OCI-LY7 (cell line): ENCODE measurements at regions of chr9 and their contacts with region 1.

Region 1: DNA sequence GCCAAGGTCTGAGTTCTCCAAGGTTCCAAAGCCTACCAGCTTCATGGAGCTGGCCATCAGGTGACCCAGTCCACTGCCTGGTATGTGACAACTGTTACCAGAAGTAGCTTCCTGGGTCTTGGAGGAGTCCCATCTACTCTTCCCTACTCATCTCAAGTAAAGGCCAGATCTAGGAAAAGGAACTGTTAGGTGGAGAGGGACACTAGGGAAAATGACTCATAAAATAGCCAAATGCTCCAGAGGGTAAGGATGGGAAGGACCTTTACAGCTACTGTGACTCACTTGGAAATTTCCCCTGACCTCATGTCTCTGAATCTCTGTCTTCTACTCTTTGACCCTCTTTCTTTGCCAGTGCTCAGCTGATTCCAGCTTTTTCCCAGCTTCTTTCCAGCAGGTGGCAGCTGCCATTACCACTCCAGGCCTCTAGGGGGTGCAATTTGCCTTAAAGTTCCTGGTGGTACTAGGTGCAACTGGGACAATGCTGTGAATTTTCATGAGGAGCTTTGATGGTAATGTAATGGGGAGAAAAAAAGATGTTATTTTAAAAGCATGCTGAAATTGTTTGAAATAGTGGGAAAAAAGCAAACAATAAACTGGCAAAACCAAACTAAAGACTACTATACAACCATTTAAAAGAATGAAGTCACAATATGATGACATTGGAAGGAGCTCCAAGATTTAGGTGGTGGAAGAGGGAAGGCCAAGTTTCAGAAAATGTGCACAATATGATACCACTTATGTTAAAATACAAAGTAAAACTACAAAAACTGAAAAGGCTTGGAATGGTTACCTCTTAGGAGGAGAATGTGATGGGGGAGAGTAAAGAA is 27.1 kb upstream of the MYORG start:
- DNase-seq: peak; percentile 65
- H3K4me3 ChIP-seq: no peak overlapping the region
- H3K27ac ChIP-seq: no peak overlapping the region
- H3K4me1 ChIP-seq: no peaks in the 10 kb centered on the region
- CTCF ChIP-seq: peak; percentile 100

Region 2: DNA sequence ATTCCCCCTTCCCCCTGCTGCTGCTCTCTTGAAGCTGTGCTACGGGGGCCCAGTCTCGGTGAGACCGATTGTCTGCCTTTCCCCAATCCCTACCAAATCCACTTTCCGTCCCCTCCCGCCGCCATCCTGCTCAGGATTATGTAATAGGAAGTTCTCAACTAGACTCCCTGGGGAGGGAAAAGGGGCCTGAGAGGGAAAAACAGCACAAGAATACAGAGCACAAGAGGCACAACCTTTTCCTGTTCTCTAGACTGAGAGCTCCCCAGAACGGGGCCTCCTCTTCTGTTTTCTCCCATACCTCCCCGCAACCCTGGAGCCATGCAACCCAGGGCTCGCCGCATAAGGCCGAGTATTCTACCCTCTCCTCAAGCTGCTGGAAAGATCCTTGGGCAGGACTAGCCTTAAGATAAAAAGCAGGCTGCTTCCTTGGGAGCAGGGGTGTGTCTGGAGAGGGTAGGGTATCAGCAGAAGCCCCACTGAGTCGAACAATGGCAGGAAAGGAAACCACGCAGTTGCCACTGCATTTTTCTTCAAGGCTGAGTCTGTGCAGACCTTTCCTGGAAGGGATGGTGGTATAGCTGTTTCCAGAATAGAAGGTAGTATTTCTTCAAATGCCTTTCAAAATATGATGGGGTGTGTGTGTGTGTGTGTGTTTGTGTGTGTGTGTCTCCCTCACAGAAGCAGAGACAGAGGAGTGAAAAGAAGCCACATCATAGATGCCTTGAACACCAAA is 40.0 kb before region 1 on chr9:
- CTCF ChIA-PET with region 1: no interaction called
- POLR2A ChIA-PET with region 1: no interaction called
- intact Hi-C with region 1: no loop called
- DNase-seq: no peak
- H3K4me3 ChIP-seq: no peak overlapping the region
- H3K27ac ChIP-seq: no peak overlapping the region
- H3K4me1 ChIP-seq: no peaks in the 10 kb centered on the region
- CTCF ChIP-seq: no peak

Region 3: GRCh38 chr9:34384368-34385165 is 19.2 kb before region 1 on chr9:
- CTCF ChIA-PET with region 1: no interaction called
- POLR2A ChIA-PET with region 1: no interaction called
- intact Hi-C with region 1: no loop called
- DNase-seq: no peak
- H3K4me3 ChIP-seq: no peak overlapping the region
- H3K27ac ChIP-seq: no peak overlapping the region
- H3K4me1 ChIP-seq: peaks cover 17% of the 10 kb centered on the region
- CTCF ChIP-seq: no peak

Region 4: GRCh38 chr9:34430843-34431437 is 27.2 kb after region 1 on chr9:
- CTCF ChIA-PET with region 1: no interaction called
- POLR2A ChIA-PET with region 1: no interaction called
- intact Hi-C with region 1: no loop called
- DNase-seq: peak; percentile 39
- H3K4me3 ChIP-seq: no peak overlapping the region
- H3K27ac ChIP-seq: no peak overlapping the region
- H3K4me1 ChIP-seq: no peaks in the 10 kb centered on the region
- CTCF ChIP-seq: no peak

Region 5: DNA sequence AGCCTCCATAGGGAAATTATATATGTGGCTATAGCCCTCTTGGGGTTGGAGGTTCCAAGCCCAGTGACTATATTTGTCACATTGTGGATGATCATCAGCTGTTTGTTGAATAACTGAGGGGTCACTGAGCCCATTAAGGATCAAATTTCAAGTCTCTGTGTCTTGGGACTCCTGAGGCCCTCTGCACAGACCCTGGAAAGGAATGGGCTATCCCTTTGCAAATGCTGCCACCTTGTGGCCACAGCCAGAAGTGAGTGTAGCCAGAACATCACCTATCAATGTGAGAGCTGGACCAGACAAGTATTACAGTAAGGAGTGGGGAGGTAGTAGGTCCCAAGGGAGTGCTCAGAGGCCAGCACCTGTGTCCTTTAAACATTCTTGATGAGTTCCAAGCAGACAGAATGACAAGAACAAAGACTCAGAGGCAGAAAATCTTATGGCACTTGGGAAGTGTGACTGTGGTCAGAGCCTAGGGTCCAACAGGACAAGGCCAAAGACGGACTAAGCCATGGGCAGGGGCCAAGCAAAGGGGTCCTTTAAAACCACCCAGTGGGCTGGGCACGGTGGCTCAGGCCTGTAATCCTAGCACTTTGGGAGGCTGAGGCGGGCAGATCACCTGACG is 200.0 kb after region 1 on chr9:
- CTCF ChIA-PET with region 1: no interaction called
- POLR2A ChIA-PET with region 1: no interaction called
- intact Hi-C with region 1: loop called (anchors 5 kb)
- DNase-seq: peak; percentile 78
- H3K4me3 ChIP-seq: no peak overlapping the region
- H3K27ac ChIP-seq: no peak overlapping the region
- H3K4me1 ChIP-seq: no peaks in the 10 kb centered on the region
- CTCF ChIP-seq: peak; percentile 96